GM12878 (cell line): ENCODE measurements at regions of chr9 and their contacts with region 1.

Region 1: DNA sequence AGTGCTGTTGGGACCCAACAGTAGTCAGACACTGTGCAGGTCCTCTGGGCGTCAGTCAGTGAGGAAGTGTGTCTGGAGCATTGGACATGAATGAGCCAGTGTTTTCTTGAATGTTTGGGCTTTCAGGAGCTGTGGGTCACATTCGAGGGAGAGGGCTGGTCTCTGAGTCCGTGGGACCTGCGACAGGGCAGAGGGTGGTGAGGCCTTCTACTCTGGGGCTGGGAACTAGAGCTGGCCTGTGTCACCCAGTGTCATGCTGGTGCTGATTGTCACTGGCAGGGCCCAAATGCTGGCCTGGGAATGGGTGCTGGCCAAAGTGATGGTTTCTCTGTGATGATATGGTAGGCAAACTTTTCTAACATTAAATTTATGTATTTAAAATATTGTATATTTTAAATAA is 10.3 kb downstream of the POLR1E start:
- DNase-seq: no peak
- ATAC-seq: no peak; the same call in 2 of the 3 replicates
- H3K4me3 ChIP-seq: no peak overlapping the region
- H3K27ac ChIP-seq: no peak overlapping the region
- H3K4me1 ChIP-seq: no peaks in the 10 kb centered on the region
- H3K27me3 ChIP-seq: no peaks in the 10 kb centered on the region
- CTCF ChIP-seq: no peak
- EP300 ChIP-seq: no peak
- POLR2A ChIP-seq: no peak
- RAD21 ChIP-seq: no peak

Region 2: GRCh38 chr9:37790096-37790495 is 294.1 kb after region 1 on chr9:
- CTCF ChIA-PET with region 1: no interaction called
- POLR2A ChIA-PET with region 1: interaction called, 12 read pairs
- RAD21 ChIA-PET with region 1: no interaction called
- SMC1A ChIA-PET with region 1: interaction called, 3 read pairs
- in situ Hi-C with region 1: no loop called
- intact Hi-C with region 1: no loop called
- DNase-seq: no peak
- ATAC-seq: no peak
- H3K4me3 ChIP-seq: no peak overlapping the region
- H3K27ac ChIP-seq: no peak overlapping the region
- H3K4me1 ChIP-seq: no peaks in the 10 kb centered on the region
- H3K27me3 ChIP-seq: no peaks in the 10 kb centered on the region
- CTCF ChIP-seq: no peak
- EP300 ChIP-seq: no peak
- POLR2A ChIP-seq: no peak
- RAD21 ChIP-seq: no peak